ENCODE measurements at regions of chr7 and their contacts with region 1.

Region 1: DNA sequence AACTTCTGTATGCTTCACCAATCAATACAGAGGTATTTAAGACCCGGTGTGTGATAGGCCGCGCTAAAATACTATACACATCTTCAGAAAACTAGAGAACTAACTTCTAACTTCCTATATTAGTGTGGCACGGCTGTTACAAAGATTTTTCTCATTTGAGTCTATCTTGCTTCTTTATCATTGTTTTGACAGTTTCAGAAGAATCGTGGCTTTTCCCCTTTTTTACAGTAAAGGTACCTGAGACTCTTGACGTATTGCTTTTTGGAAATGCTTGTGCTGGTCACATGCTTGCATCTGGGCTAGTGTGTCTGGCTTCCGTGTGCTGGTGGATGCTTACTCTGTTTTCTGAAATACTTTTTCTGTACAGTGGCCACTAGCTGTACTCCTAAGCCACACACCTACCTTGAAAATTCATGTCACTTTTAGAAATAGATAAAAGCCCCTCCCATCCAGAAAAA is 12.7 kb downstream of the IKZF1 start:
- DNase-seq: peak in 1 of 2 donors; percentile 92
- ATAC-seq: peak; percentile 67 to 77 (median 76)
- H3K4me3 ChIP-seq: no peak overlapping the region
- H3K4me3 Mint-ChIP-seq: peak overlapping the region; percentile 93
- H3K27ac ChIP-seq: peak overlapping the region; percentile 93
- H3K27ac Mint-ChIP-seq: peak overlapping the region in 1 of 2 donors; percentile 98
- H3K4me1 ChIP-seq: peaks cover 65% of the 10 kb centered on the region
- H3K4me1 Mint-ChIP-seq: peaks cover 96 to 97% of the 10 kb centered on the region in 2 donors
- H3K27me3 ChIP-seq: no peaks in the 10 kb centered on the region
- H3K27me3 Mint-ChIP-seq: no peaks in the 10 kb centered on the region
- CTCF ChIP-seq: no peak

Region 2: DNA sequence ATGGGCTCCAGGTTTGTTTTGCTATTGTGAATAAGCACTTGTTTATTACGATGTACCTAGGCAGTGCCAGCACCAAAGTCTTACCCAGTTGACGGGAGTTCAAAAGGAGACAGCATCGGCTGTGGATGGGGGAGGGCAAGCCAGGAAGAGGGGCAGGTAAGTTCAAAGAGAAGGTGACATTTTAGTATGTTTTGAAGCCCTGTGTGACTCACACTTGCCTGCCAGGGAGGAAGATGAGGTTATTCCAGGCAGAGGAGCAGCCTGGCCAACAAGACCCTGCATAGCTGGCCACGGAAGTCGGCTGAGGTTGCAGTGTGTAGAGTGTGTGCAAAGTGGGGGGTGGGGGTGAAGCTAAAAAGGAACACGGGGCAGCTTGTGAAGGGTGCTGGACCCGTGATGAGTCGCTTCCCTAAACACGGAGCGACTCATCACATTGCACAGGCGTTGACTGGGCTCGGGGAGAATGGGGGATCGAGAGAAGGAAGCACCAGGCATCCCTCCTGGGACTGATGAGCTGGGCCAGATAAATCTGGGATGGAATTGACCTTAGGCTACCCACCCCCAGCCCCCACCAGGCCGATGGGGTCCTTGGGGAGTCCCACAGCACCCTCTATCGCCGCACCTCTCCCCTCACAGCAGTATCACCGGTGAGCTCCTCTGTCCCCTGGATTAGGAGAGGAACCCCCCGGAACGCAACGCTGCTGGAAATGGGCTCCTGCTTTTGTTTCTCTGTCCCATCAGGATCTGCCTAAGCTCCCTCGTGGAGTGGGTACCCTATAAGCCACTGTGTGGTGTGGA is 110.6 kb before region 1 on chr7:
- intact Hi-C with region 1: loop called (anchors 5 kb)
- DNase-seq: peak in 1 of 2 donors; percentile 79
- ATAC-seq: peak; percentile 45 to 68 (median 48)
- H3K4me3 ChIP-seq: no peak overlapping the region
- H3K4me3 Mint-ChIP-seq: peak overlapping the region; percentile 56
- H3K27ac ChIP-seq: peak overlapping the region; percentile 14
- H3K27ac Mint-ChIP-seq: peak overlapping the region; percentile 35 to 83
- H3K4me1 ChIP-seq: peaks cover 45% of the 10 kb centered on the region
- H3K4me1 Mint-ChIP-seq: peaks cover 37 to 45% of the 10 kb centered on the region in 2 donors
- H3K27me3 ChIP-seq: no peaks in the 10 kb centered on the region
- H3K27me3 Mint-ChIP-seq: no peaks in the 10 kb centered on the region
- CTCF ChIP-seq: no peak